ENCODE measurements at regions of chr6 and their contacts with region 1.

Region 1: DNA sequence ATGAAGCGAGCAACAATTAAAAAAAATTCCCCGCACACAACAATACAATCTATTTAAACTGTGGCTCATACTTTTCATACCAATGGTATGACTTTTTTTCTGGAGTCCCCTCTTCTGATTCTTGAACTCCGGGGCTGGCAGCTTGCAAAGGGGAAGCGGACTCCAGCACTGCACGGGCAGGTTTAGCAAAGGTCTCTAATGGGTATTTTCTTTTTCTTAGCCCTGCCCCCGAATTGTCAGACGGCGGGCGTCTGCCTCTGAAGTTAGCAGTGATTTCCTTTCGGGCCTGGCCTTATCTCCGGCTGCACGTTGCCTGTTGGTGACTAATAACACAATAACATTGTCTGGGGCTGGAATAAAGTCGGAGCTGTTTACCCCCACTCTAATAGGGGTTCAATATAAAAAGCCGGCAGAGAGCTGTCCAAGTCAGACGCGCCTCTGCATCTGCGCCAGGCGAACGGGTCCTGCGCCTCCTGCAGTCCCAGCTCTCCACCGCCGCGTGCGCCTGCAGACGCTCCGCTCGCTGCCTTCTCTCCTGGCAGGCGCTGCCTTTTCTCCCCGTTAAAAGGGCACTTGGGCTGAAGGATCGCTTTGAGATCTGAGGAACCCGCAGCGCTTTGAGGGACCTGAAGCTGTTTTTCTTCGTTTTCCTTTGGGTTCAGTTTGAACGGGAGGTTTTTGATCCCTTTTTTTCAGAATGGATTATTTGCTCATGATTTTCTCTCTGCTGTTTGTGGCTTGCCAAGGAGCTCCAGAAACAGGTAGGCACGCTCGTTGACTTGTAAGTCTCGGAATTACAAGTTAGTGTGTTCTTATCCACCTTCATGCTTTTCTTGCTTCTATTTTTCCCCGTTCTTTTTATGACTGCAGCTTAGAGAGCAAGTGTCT is at the start of gene EDN1:
- DNase-seq: peak; percentile 73
- ATAC-seq: peak; percentile 89
- H3K4me3 Mint-ChIP-seq: peak within 1 kb of the TSS; percentile 75
- H3K27ac Mint-ChIP-seq: no peak within 1 kb of the TSS
- H3K4me1 Mint-ChIP-seq: peaks cover 9% of the 10 kb centered on the region
- H3K27me3 Mint-ChIP-seq: peaks cover 29% of the 10 kb centered on the region
- CTCF ChIP-seq: no peak
- total RNA-seq, gene EDN1: 0.14 TPM in 1 of 2 experiments, not detected in the other

Region 2: DNA sequence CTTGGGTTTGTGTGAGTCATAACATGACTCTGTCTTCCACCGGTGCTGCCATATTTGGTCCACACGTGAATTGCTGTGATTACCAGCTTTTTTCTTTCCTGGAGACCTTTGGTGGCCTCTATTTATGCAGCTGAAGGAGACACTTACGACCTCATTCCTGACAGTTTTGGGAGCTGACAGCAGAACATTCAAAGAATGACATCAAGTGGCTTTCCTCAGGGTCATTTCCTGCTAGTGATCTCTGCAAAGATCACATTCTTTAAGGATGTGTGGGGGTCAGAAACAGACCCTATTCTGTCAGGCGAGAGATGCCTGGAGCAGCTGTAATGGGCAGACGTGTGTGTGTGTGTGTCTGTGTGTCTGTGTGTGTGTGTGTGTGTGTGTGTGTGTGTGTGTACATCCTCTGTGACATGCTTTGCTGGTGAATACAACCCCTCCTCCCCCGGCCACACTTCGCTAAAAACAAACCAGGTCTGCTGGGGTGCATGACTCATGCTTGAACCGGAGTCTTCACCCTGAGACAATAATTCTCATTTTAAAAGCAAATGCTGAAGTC is 637.1 kb before region 1 on chr6:
- CTCF ChIA-PET with region 1: interaction called, 57 read pairs
- POLR2A ChIA-PET with region 1: no interaction called
- intact Hi-C with region 1: loop called (anchors 5 kb)
- DNase-seq: peak; percentile 78
- ATAC-seq: peak; percentile 90
- H3K4me3 Mint-ChIP-seq: no peak overlapping the region
- H3K27ac Mint-ChIP-seq: no peak overlapping the region
- H3K4me1 Mint-ChIP-seq: peaks cover 16% of the 10 kb centered on the region
- H3K27me3 Mint-ChIP-seq: peaks cover 10% of the 10 kb centered on the region
- CTCF ChIP-seq: no peak

Region 3: DNA sequence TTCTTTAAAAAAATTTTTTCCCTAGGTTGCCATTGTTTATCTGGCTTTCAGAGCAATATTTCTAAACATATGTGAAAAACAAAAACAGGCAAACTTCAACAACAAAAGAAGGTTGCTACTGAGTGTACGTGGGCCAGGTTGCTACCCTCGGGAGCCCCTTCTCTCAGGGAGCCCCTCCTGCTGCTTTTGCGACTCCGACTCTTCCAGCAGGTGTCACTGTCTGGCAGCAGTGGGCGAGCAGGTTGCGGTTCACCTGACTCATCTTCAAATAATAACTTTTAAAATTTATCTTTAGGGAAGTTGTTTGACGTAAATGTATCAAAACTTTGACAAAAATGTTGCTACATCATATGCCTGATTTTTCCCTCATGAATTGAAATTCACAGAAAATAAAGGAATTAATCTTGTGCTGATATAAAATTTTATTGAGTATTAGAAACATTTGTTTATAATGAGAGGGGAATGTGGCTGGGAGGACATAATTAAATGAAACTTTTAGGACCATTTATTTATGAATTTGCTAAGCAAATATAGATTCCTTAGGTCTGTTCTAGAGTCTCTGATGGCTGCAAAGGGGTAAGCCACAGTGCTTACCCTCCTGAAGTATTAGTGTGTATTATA is 139.3 kb before region 1 on chr6:
- CTCF ChIA-PET with region 1: interaction called, 7 read pairs
- POLR2A ChIA-PET with region 1: no interaction called
- intact Hi-C with region 1: loop called (anchors 5 kb)
- DNase-seq: peak; percentile 60
- ATAC-seq: no peak
- H3K4me3 Mint-ChIP-seq: no peak overlapping the region
- H3K27ac Mint-ChIP-seq: no peak overlapping the region
- H3K4me1 Mint-ChIP-seq: peaks cover 15% of the 10 kb centered on the region
- H3K27me3 Mint-ChIP-seq: no peaks in the 10 kb centered on the region
- CTCF ChIP-seq: peak; percentile 60

Region 4: GRCh38 chr6:12233693-12234571 is 56.2 kb before region 1 on chr6:
- CTCF ChIA-PET with region 1: interaction called, 12 read pairs
- POLR2A ChIA-PET with region 1: no interaction called
- intact Hi-C with region 1: no loop called
- DNase-seq: peak; percentile 62
- ATAC-seq: peak; percentile 94
- H3K4me3 Mint-ChIP-seq: no peak overlapping the region
- H3K27ac Mint-ChIP-seq: no peak overlapping the region
- H3K4me1 Mint-ChIP-seq: peaks cover 42% of the 10 kb centered on the region
- H3K27me3 Mint-ChIP-seq: no peaks in the 10 kb centered on the region
- CTCF ChIP-seq: peak; percentile 72

Region 5: DNA sequence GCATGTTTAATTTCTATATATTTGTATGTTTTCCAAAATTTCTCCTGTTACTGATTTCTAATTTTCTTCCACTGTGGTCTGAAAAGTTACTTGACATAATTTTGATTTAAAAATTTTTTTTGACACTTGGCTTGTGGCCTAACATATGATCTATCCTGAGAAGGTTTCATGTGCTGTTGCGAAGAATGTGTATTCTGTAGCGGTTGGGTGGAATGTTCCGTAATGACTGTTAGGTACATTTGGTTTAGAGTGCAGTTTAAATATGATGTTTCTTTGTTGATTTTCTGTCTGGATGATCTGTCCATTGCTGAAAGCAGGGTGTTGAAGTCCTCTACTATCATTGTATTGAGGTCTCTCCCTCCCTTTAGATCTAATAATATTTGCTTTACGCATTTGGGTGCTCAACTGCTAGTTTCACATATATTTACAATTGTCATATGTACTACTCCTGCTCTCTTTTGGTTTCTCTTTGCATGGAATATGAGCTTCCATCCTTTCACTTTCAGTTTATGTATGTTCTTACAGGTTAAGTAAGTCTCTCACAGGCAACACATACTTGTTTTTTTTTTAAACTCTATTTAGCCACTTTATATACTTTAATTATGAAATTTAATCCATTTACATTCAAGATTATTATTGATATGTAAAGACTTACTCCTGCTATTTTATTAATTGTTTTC is 19.5 kb before region 1 on chr6:
- CTCF ChIA-PET with region 1: interaction called, 26 read pairs
- POLR2A ChIA-PET with region 1: no interaction called
- intact Hi-C with region 1: no loop called
- DNase-seq: no peak
- ATAC-seq: no peak
- H3K4me3 Mint-ChIP-seq: no peak overlapping the region
- H3K27ac Mint-ChIP-seq: no peak overlapping the region
- H3K4me1 Mint-ChIP-seq: peaks cover 13% of the 10 kb centered on the region
- H3K27me3 Mint-ChIP-seq: peaks cover 1% of the 10 kb centered on the region
- CTCF ChIP-seq: no peak

Region 6: DNA sequence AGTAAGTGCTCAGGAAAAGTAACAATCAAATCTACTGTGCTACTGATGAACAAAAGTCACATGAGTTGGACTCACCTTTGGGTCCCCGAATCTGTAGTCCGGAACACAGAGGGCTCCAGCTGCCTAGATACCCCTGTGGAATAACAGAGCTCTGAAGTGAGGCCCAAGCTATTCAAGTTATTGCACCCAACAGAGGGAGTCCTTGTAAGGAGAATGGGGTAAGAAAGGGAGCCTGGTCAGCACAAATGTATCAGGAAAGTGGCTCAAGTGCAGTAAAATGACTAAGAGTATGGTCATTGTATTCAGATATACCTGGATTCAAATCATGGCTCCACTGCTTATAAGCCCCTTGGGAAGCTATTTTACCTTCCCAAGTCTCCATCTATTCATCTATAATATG is 20.9 kb after region 1 on chr6:
- CTCF ChIA-PET with region 1: interaction called, 12 read pairs
- POLR2A ChIA-PET with region 1: interaction called, 4 read pairs
- intact Hi-C with region 1: no loop called
- DNase-seq: no peak
- ATAC-seq: no peak
- H3K4me3 Mint-ChIP-seq: no peak overlapping the region
- H3K27ac Mint-ChIP-seq: no peak overlapping the region
- H3K4me1 Mint-ChIP-seq: no peaks in the 10 kb centered on the region
- H3K27me3 Mint-ChIP-seq: peaks cover 4% of the 10 kb centered on the region
- CTCF ChIP-seq: no peak

Region 7: DNA sequence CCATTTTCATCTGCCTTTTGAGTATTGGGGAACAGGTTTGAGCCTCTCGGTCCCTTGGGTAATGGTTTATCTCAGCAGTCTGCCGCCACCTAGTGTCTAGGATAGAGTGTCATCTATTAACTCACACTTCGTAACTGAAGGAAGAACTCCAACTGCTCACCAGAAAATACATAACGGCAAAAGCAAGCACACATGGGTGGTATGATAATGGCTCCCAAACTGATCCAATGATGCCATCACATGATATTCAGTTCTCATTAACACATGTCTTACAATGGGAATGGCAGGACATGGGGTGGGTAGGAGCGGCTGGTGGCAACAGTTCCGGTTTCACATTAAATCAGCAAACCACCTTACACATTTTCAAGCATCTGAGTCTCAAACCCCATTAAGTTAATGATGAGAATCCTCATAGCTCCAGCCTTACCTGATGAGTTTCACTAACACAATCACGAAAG is 315.7 kb after region 1 on chr6:
- CTCF ChIA-PET with region 1: interaction called, 6 read pairs
- POLR2A ChIA-PET with region 1: no interaction called
- intact Hi-C with region 1: loop called (anchors 10 kb)
- DNase-seq: peak; percentile 62
- ATAC-seq: peak; percentile 75
- H3K4me3 Mint-ChIP-seq: no peak overlapping the region
- H3K27ac Mint-ChIP-seq: no peak overlapping the region
- H3K4me1 Mint-ChIP-seq: no peaks in the 10 kb centered on the region
- H3K27me3 Mint-ChIP-seq: peaks cover 14% of the 10 kb centered on the region
- CTCF ChIP-seq: peak; percentile 65